ENCODE measurements at regions of chr12 and their contacts with region 1.

Region 1: GRCh38 chr12:75944097-75944904 is 87.3 kb downstream of the PHLDA1 start:
- DNase-seq: peak in 1 of 2 experiments; percentile 53
- H3K4me3 ChIP-seq: no peak overlapping the region
- H3K4me3 Mint-ChIP-seq: peak overlapping the region; percentile 57
- H3K27ac Mint-ChIP-seq: peak overlapping the region; percentile 33
- H3K4me1 ChIP-seq: peaks cover 45% of the 10 kb centered on the region
- H3K4me1 Mint-ChIP-seq: peaks cover 22% of the 10 kb centered on the region
- H3K27me3 ChIP-seq: no peaks in the 10 kb centered on the region
- H3K27me3 Mint-ChIP-seq: no peaks in the 10 kb centered on the region
- CTCF ChIP-seq: no peak

Region 2: GRCh38 chr12:75526655-75527511 is 417.4 kb before region 1 on chr12:
- CTCF ChIA-PET with region 1: no interaction called
- POLR2A ChIA-PET with region 1: no interaction called
- intact Hi-C with region 1: loop called (anchors 2 kb)
- DNase-seq: peak; percentile 28 to 37
- H3K4me3 ChIP-seq: no peak overlapping the region
- H3K4me3 Mint-ChIP-seq: no peak overlapping the region
- H3K27ac Mint-ChIP-seq: no peak overlapping the region
- H3K4me1 ChIP-seq: no peaks in the 10 kb centered on the region
- H3K4me1 Mint-ChIP-seq: peaks cover 17% of the 10 kb centered on the region
- H3K27me3 ChIP-seq: no peaks in the 10 kb centered on the region
- H3K27me3 Mint-ChIP-seq: peaks cover 2% of the 10 kb centered on the region
- CTCF ChIP-seq: peak; percentile 75 to 77

Region 3: DNA sequence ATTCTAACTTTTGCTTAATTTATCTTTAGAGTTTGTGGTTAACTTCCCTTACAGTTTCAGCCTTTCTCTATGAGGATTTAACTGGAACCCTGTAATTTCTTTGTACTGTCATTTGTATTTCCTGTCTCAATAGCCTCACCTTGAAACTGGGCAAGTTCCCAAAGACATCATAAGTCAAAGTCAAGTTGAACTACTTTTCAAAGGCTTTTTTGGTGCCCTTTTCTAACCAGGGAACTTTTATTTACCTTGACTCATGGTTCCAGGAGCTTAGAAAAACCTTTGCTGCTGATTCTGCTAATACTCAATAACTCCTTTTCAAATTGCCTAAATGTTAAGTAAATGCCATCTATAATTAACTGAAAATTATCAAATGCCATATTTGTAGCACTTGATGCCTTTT is 232.0 kb before region 1 on chr12:
- CTCF ChIA-PET with region 1: no interaction called
- POLR2A ChIA-PET with region 1: no interaction called
- intact Hi-C with region 1: loop called (anchors 1 kb)
- DNase-seq: no peak
- H3K4me3 ChIP-seq: no peak overlapping the region
- H3K4me3 Mint-ChIP-seq: no peak overlapping the region
- H3K27ac Mint-ChIP-seq: no peak overlapping the region
- H3K4me1 ChIP-seq: peaks cover 28% of the 10 kb centered on the region
- H3K4me1 Mint-ChIP-seq: peaks cover 33% of the 10 kb centered on the region
- H3K27me3 ChIP-seq: no peaks in the 10 kb centered on the region
- H3K27me3 Mint-ChIP-seq: no peaks in the 10 kb centered on the region
- CTCF ChIP-seq: no peak

Region 4: GRCh38 chr12:75964150-75964549 is 19.8 kb after region 1 on chr12:
- CTCF ChIA-PET with region 1: no interaction called
- POLR2A ChIA-PET with region 1: interaction called, 4 read pairs
- intact Hi-C with region 1: loop called (anchors 1 kb)
- DNase-seq: no peak
- H3K4me3 ChIP-seq: no peak overlapping the region
- H3K4me3 Mint-ChIP-seq: no peak overlapping the region
- H3K27ac Mint-ChIP-seq: peak overlapping the region; percentile 23
- H3K4me1 ChIP-seq: peaks cover 48% of the 10 kb centered on the region
- H3K4me1 Mint-ChIP-seq: peaks cover 52% of the 10 kb centered on the region
- H3K27me3 ChIP-seq: no peaks in the 10 kb centered on the region
- H3K27me3 Mint-ChIP-seq: no peaks in the 10 kb centered on the region
- CTCF ChIP-seq: no peak

Region 5: GRCh38 chr12:75990189-75990912 is 46.0 kb after region 1 on chr12:
- CTCF ChIA-PET with region 1: interaction called, 6 read pairs
- POLR2A ChIA-PET with region 1: no interaction called
- intact Hi-C with region 1: loop called (anchors 1 kb)
- DNase-seq: peak in 1 of 2 experiments; percentile 77
- H3K4me3 ChIP-seq: no peak overlapping the region
- H3K4me3 Mint-ChIP-seq: peak overlapping the region; percentile 18
- H3K27ac Mint-ChIP-seq: peak overlapping the region; percentile 89
- H3K4me1 ChIP-seq: peaks cover 79% of the 10 kb centered on the region
- H3K4me1 Mint-ChIP-seq: peaks cover 46% of the 10 kb centered on the region
- H3K27me3 ChIP-seq: no peaks in the 10 kb centered on the region
- H3K27me3 Mint-ChIP-seq: no peaks in the 10 kb centered on the region
- CTCF ChIP-seq: no peak

Region 6: DNA sequence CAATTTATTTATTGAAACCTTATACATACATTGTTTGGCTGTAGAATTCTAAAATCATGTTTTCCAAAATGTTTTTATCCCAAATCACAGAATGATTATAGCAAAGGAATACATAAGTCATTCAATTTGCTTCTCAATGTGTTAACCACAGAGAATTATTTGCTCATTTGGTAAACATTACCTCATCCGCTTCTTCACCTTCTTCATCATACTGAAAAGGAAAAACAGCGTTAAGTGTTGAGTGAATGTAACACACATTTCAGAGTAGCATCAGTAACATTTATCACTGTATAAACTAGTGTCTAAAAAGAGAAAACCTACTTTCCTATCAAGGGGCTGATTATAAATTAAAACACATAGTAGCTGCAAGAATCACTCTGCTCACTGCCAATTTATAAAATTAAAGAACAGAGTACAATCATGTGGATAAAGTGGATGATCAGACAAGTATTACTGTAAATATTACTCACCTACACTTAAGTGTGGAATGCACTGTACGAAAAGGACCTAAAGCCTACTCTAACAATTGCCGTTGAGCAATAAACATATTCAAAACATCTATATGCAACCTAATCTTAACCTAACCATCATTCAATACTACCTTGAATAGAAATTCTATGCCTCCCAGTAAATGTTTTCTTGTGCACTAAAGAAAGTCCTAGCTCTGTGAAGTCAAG is 105.4 kb after region 1 on chr12:
- CTCF ChIA-PET with region 1: no interaction called
- POLR2A ChIA-PET with region 1: no interaction called
- intact Hi-C with region 1: no loop called
- DNase-seq: no peak
- H3K4me3 ChIP-seq: no peak overlapping the region
- H3K4me3 Mint-ChIP-seq: no peak overlapping the region
- H3K27ac Mint-ChIP-seq: no peak overlapping the region
- H3K4me1 ChIP-seq: no peaks in the 10 kb centered on the region
- H3K4me1 Mint-ChIP-seq: no peaks in the 10 kb centered on the region
- H3K27me3 ChIP-seq: no peaks in the 10 kb centered on the region
- H3K27me3 Mint-ChIP-seq: no peaks in the 10 kb centered on the region
- CTCF ChIP-seq: no peak